AG04449 (cell line): ENCODE measurements at regions of chr7 and their contacts with region 1.

Region 1: GRCh38 chr7:82740246-82740848 is 296.8 kb upstream of the CACNA2D1 start:
- DNase-seq: no peak
- H3K4me3 ChIP-seq: no peak overlapping the region
- CTCF ChIP-seq: peak; percentile 62

Region 2: GRCh38 chr7:82950436-82950835 is 210.1 kb after region 1 on chr7:
- CTCF ChIA-PET with region 1: interaction called, 12 read pairs
- POLR2A ChIA-PET with region 1: no interaction called
- DNase-seq: no peak
- H3K4me3 ChIP-seq: no peak overlapping the region
- CTCF ChIP-seq: no peak

Region 3: GRCh38 chr7:83271212-83272099 is 531.1 kb after region 1 on chr7:
- CTCF ChIA-PET with region 1: interaction called, 10 read pairs
- POLR2A ChIA-PET with region 1: no interaction called
- DNase-seq: no peak
- H3K4me3 ChIP-seq: no peak overlapping the region
- CTCF ChIP-seq: peak; percentile 19